Activated CD8-positive, alpha-beta T cell treated with anti-CD3 and anti-CD28 coated beads, Interleukin-2, amount 10 ng/mL, durations not matched to agents 7 days and 5 days (primary cell): ENCODE measurements at regions of chr20 and their contacts with region 1.

Region 1: DNA sequence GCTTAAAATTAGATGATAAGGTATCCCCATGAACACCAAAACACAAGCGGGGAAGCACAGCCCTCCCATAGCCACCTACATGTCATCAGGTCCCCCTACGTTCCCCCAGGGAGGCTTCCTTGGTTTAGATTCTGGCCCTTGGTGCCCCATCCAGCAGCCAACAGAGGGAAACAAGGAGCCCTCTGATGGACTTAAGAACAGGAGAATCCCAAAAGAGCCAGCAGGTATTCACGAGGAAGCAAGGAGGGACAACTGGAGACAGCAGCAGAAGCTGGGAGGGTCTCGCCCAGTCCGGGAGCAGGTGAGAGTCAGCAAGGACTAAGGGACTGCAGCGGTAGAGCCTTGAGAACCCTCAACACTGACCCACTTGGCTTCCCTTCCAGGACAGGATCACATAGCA is 58.4 kb upstream of the TOP1 start:
- DNase-seq: no peak
- ATAC-seq: no peak
- H3K4me3 Mint-ChIP-seq: no peak overlapping the region
- H3K27ac Mint-ChIP-seq: no peak overlapping the region
- H3K4me1 Mint-ChIP-seq: peaks cover 22% of the 10 kb centered on the region
- H3K27me3 Mint-ChIP-seq: peaks cover 39% of the 10 kb centered on the region

Region 2: GRCh38 chr20:41078329-41078728 is 108.1 kb after region 1 on chr20:
- CTCF ChIA-PET with region 1: interaction called, 16 read pairs
- POLR2A ChIA-PET with region 1: no interaction called
- DNase-seq: peak; percentile 26
- ATAC-seq: peak; percentile 36
- H3K4me3 Mint-ChIP-seq: peak overlapping the region; percentile 36
- H3K27ac Mint-ChIP-seq: peak overlapping the region; percentile 27
- H3K4me1 Mint-ChIP-seq: peaks cover 77% of the 10 kb centered on the region
- H3K27me3 Mint-ChIP-seq: no peaks in the 10 kb centered on the region